Heart left ventricle (tissue), 16 donors: ENCODE measurements at regions of chr10 and their contacts with region 1.

Region 1: GRCh38 chr10:95327367-95327766 is 36.6 kb upstream of the PDLIM1 start:
- DNase-seq: peak in 4 of 5 donors; percentile 69 to 74 (median 74)
- ATAC-seq: peak; percentile 48 to 83 (median 54)
- H3K4me3 ChIP-seq: no peak overlapping the region
- H3K27ac ChIP-seq: peak overlapping the region in 10 of 12 donors; percentile 9 to 89 (median 68)
- H3K4me1 ChIP-seq: peaks cover 4 to 82% (median 36%) of the 10 kb centered on the region in 12 donors
- H3K27me3 ChIP-seq: no peaks in the 10 kb centered on the region
- CTCF ChIP-seq: peak in 1 of 12 donors; percentile 8
- POLR2A ChIP-seq: no peak

Region 2: GRCh38 chr10:95290461-95291364 is 36.7 kb before region 1 on chr10 and contains the start of gene PDLIM1:
- intact Hi-C with region 1: loop called in 4 of 10 experiments (anchors 5 kb)
- DNase-seq: peak; percentile 82 to 88 (median 85)
- ATAC-seq: peak; percentile 23 to 92 (median 80)
- H3K4me3 ChIP-seq: peak within 1 kb of the TSS; percentile 77 to 100 (median 90)
- H3K27ac ChIP-seq: peak within 1 kb of the TSS; percentile 83 to 99 (median 94)
- H3K4me1 ChIP-seq: peaks cover 6 to 55% (median 46%) of the 10 kb centered on the region in 12 donors
- H3K27me3 ChIP-seq: no peaks in the 10 kb centered on the region
- CTCF ChIP-seq: peak in 8 of 12 donors; percentile 15 to 51 (median 43)
- POLR2A ChIP-seq: peak; percentile 8 to 92
- total RNA-seq, gene PDLIM1: 225 to 434 (median 349) TPM

Region 3: GRCh38 chr10:95391581-95392216 is 64.3 kb after region 1 on chr10:
- intact Hi-C with region 1: no loop called
- DNase-seq: no peak
- ATAC-seq: peak in 2 of 4 donors; percentile 17 to 25
- H3K4me3 ChIP-seq: no peak overlapping the region
- H3K27ac ChIP-seq: peak overlapping the region in 11 of 12 donors; percentile 24 to 98 (median 50)
- H3K4me1 ChIP-seq: peaks cover 4 to 95% (median 74%) of the 10 kb centered on the region in 12 donors
- H3K27me3 ChIP-seq: no peaks in the 10 kb centered on the region
- CTCF ChIP-seq: peak in 1 of 12 donors; percentile 23
- POLR2A ChIP-seq: no peak